ENCODE measurements at regions of chr4 and their contacts with region 1.

Region 1: GRCh38 chr4:67573193-67573592 is 14.7 kb downstream of the STAP1 start:
- DNase-seq: no peak
- H3K4me3 Mint-ChIP-seq: no peak overlapping the region
- H3K27ac Mint-ChIP-seq: peak overlapping the region; percentile 49
- H3K4me1 Mint-ChIP-seq: peaks cover 44% of the 10 kb centered on the region
- H3K27me3 Mint-ChIP-seq: no peaks in the 10 kb centered on the region

Region 2: GRCh38 chr4:67545199-67546003 is 27.8 kb before region 1 on chr4 and contains the start of gene CENPC:
- intact Hi-C with region 1: no loop called
- DNase-seq: peak; percentile 93
- H3K4me3 Mint-ChIP-seq: peak within 1 kb of the TSS; percentile 100
- H3K27ac Mint-ChIP-seq: peak within 1 kb of the TSS; percentile 99
- H3K4me1 Mint-ChIP-seq: peaks cover 35% of the 10 kb centered on the region
- H3K27me3 Mint-ChIP-seq: no peaks in the 10 kb centered on the region
- total RNA-seq, gene CENPC: 31.6 and 32.0 TPM in 2 replicates

Region 3: DNA sequence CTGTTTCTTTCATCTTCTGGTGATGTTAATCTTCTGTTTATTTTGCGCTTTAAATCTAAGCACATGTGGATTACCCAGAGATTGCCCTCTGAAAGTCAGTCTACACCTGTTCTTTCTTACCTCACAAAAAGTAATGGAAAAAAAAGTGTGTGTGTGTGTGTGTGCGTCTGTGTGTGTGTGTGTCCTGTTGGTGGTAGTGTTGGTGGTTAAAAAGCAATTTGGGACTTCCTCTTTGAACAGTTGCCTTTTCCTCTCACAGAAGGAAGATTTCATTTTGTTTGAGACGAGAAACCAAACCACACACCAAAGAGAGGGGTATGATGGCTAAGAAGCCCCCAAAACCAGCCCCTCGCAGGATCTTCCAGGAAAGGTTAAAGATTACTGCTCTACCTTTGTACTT is 14.7 kb before region 1 on chr4 and contains the start of gene STAP1:
- intact Hi-C with region 1: loop called (anchors 2 kb)
- DNase-seq: peak; percentile 52
- H3K4me3 Mint-ChIP-seq: peak within 1 kb of the TSS; percentile 93
- H3K27ac Mint-ChIP-seq: peak within 1 kb of the TSS; percentile 95
- H3K4me1 Mint-ChIP-seq: peaks cover 53% of the 10 kb centered on the region
- H3K27me3 Mint-ChIP-seq: no peaks in the 10 kb centered on the region
- total RNA-seq, gene STAP1: 18.8 and 18.9 TPM in 2 replicates